Panc1 (cell line): ENCODE measurements at regions of chr20 and their contacts with region 1.

Region 1: GRCh38 chr20:38997622-38998021 is 35.5 kb downstream of the DHX35 start:
- DNase-seq: no peak
- ATAC-seq: no peak
- H3K4me3 ChIP-seq: no peak overlapping the region
- H3K27ac ChIP-seq: no peak overlapping the region
- H3K4me1 ChIP-seq: no peaks in the 10 kb centered on the region
- H3K27me3 ChIP-seq: no peaks in the 10 kb centered on the region
- CTCF ChIP-seq: no peak

Region 2: DNA sequence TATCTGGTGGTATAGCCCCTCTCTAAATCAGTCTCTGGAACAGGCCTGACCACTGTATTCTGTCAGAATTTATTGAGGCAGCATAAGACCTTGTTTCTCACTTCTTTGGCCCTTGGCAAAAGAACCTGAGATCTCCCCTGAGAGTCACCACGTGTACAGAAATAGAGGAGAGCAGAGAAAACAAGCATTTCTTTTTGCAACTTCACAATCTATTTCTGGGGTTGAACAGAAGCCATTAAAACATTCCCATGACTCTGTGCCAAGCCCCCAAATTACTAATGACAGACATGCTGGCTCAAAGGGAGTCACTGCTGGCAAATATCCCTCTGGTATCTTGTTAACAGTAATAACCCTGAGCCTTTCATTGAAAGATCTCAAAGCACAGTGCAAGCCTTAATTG is 1296.1 kb after region 1 on chr20:
- CTCF ChIA-PET with region 1: no interaction called
- POLR2A ChIA-PET with region 1: interaction called, 11 read pairs
- in situ Hi-C with region 1: no loop called
- intact Hi-C with region 1: no loop called
- DNase-seq: no peak
- ATAC-seq: no peak
- H3K4me3 ChIP-seq: no peak overlapping the region
- H3K27ac ChIP-seq: no peak overlapping the region
- H3K4me1 ChIP-seq: no peaks in the 10 kb centered on the region
- H3K27me3 ChIP-seq: no peaks in the 10 kb centered on the region
- CTCF ChIP-seq: no peak